PC-3 (cell line): ENCODE measurements at regions of chr5 and their contacts with region 1.

Region 1: GRCh38 chr5:25763781-25764180 is 1119.0 kb upstream of the CDH10 start:
- DNase-seq: no peak
- ATAC-seq: 0 out of 2 replicates have a peak, but pooled peaks have one; percentile 27
- H3K4me3 ChIP-seq: no peak overlapping the region
- H3K27ac ChIP-seq: no peak overlapping the region
- H3K4me1 ChIP-seq: no peaks in the 10 kb centered on the region
- H3K27me3 ChIP-seq: no peaks in the 10 kb centered on the region
- CTCF ChIP-seq: no peak

Region 2: GRCh38 chr5:26009742-26010141 is 246.0 kb after region 1 on chr5:
- CTCF ChIA-PET with region 1: interaction called, 3 read pairs
- POLR2A ChIA-PET with region 1: no interaction called
- intact Hi-C with region 1: loop called (anchors 2 kb)
- DNase-seq: peak; percentile 52
- ATAC-seq: peak; percentile 81
- H3K4me3 ChIP-seq: peak overlapping the region; percentile 40; the same call in 1 of the 2 replicates
- H3K27ac ChIP-seq: no peak overlapping the region
- H3K4me1 ChIP-seq: no peaks in the 10 kb centered on the region
- H3K27me3 ChIP-seq: no peaks in the 10 kb centered on the region
- CTCF ChIP-seq: peak; percentile 77

Region 3: GRCh38 chr5:26700759-26701384 is 937.1 kb after region 1 on chr5:
- CTCF ChIA-PET with region 1: interaction called, 3 read pairs
- POLR2A ChIA-PET with region 1: no interaction called
- intact Hi-C with region 1: loop called (anchors 5 kb)
- DNase-seq: peak; percentile 75
- ATAC-seq: peak; percentile 82
- H3K4me3 ChIP-seq: no peak overlapping the region
- H3K27ac ChIP-seq: no peak overlapping the region
- H3K4me1 ChIP-seq: no peaks in the 10 kb centered on the region
- H3K27me3 ChIP-seq: no peaks in the 10 kb centered on the region
- CTCF ChIP-seq: peak; percentile 89